ENCODE measurements at regions of chr4 and their contacts with region 1.

Region 1: GRCh38 chr4:3201718-3202702 is 46.9 kb upstream of the MSANTD1 start:
- DNase-seq: peak; percentile 31 to 92 (median 78)
- ATAC-seq: peak; percentile 97 to 99
- H3K4me3 Mint-ChIP-seq: peak overlapping the region; percentile 67 to 83 (median 73)
- H3K27ac Mint-ChIP-seq: peak overlapping the region; percentile 26 to 87 (median 78)
- H3K4me1 Mint-ChIP-seq: peaks cover 17 to 63% (median 52%) of the 10 kb centered on the region in 4 donors
- H3K27me3 Mint-ChIP-seq: no peaks in the 10 kb centered on the region

Region 2: GRCh38 chr4:3145234-3145924 is 56.6 kb before region 1 on chr4:
- POLR2A ChIA-PET with region 1: no interaction called
- DNase-seq: no peak
- ATAC-seq: no peak
- H3K4me3 Mint-ChIP-seq: no peak overlapping the region
- H3K27ac Mint-ChIP-seq: peak overlapping the region in 1 of 10 donors; percentile 13
- H3K4me1 Mint-ChIP-seq: peaks cover 0 to 11% (median 0%) of the 10 kb centered on the region in 4 donors
- H3K27me3 Mint-ChIP-seq: no peaks in the 10 kb centered on the region

Region 3: DNA sequence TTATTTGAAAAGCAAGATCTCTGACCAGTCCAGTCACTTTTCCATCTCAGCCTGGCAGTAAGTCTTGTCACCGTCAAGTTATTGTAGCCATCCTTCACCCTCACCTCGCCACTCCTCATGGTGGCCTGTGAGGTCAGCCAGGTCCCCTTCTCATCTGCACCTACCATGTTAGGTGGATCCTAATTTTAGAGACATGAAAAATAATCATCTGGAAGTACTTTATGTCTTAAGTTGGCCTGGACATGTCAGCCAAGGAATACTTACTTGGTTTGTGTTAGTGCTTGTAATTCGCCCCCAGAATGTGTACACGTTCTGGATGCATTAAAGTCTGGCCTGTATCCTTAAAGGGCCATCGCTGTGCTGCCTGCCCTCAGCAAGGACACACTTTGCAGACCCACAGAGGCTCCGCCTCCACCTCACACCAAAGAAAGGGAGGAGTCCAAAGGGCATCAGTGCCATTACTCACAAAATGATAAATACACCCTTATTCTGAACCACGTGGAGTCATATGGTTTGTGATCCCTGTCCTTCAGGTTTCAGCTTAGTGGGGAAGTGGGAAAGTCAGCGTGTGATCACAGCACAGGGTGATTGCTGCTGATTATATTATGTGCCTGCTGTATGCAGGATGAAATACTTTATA is 10.9 kb after region 1 on chr4:
- POLR2A ChIA-PET with region 1: interaction called, 11 read pairs
- DNase-seq: no peak
- ATAC-seq: no peak
- H3K4me3 Mint-ChIP-seq: no peak overlapping the region
- H3K27ac Mint-ChIP-seq: peak overlapping the region in 2 of 10 donors; percentile 29 to 40
- H3K4me1 Mint-ChIP-seq: no peaks in the 10 kb centered on the region
- H3K27me3 Mint-ChIP-seq: no peaks in the 10 kb centered on the region

Region 4: GRCh38 chr4:3226467-3226866 is 24.5 kb after region 1 on chr4:
- POLR2A ChIA-PET with region 1: no interaction called
- DNase-seq: no peak
- ATAC-seq: no peak
- H3K4me3 Mint-ChIP-seq: no peak overlapping the region
- H3K27ac Mint-ChIP-seq: peak overlapping the region in 1 of 10 donors; percentile 6
- H3K4me1 Mint-ChIP-seq: peaks cover 0 to 7% (median under 1%) of the 10 kb centered on the region in 4 donors
- H3K27me3 Mint-ChIP-seq: no peaks in the 10 kb centered on the region

Region 5: GRCh38 chr4:3369781-3370674 is 168.0 kb after region 1 on chr4:
- POLR2A ChIA-PET with region 1: no interaction called
- DNase-seq: peak in 6 of 10 donors; percentile 16 to 55 (median 44)
- ATAC-seq: peak; percentile 61 to 74
- H3K4me3 Mint-ChIP-seq: peak overlapping the region; percentile 68 to 92 (median 81)
- H3K27ac Mint-ChIP-seq: peak overlapping the region in 9 of 10 donors; percentile 10 to 65 (median 53)
- H3K4me1 Mint-ChIP-seq: peaks cover 21 to 64% (median 38%) of the 10 kb centered on the region in 4 donors
- H3K27me3 Mint-ChIP-seq: peaks cover 6 to 22% (median 15%) of the 10 kb centered on the region in 5 donors

Region 6: DNA sequence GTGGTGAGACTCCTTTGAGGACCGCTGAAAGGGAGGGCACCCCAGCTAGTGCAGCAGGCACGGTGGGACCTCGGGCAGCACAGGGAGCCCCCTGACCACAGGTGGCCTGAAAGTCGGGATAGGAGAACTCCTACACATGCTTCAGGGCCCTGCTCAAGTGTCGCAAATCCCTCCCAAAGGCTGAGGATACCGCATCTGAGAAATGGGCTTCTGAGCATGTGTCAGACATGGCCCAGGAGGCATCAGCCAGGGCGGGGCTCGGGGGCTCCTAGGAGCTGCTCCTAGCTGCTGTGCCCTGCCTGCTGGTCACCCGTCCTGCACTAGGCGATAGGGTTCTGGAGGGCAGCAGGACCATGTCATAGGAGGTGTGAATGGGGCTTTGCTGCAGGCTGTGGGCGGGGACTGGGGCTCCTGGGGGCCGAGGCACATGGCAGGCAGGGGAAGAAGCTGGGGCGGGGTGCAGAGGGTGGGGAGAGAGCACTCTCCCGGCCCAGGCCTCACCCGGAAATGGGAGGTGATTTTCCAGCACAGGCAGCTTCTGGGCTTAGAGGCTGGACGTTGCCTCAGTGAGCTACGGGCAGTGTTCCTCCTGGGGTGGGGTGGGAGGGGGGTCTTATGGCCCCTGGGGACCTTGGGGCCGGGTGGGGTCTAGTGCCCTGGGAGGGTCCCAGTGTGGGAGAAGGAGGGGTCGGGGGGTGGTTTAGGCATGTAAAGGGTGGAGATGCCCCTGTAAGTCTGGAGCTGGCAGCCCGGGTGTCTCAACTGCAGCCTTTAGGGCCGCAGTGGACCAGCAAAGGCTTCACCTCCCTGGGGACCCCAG is 428.7 kb after region 1 on chr4:
- POLR2A ChIA-PET with region 1: no interaction called
- DNase-seq: no peak
- ATAC-seq: no peak
- H3K4me3 Mint-ChIP-seq: no peak overlapping the region
- H3K27ac Mint-ChIP-seq: no peak overlapping the region
- H3K4me1 Mint-ChIP-seq: no peaks in the 10 kb centered on the region
- H3K27me3 Mint-ChIP-seq: peaks cover under 1 to 23% (median 12%) of the 10 kb centered on the region in 5 donors

Measured in naive thymus-derived CD8-positive, alpha-beta T cell (primary cell).